ENCODE measurements at regions of chr1 and their contacts with region 1.

Region 1: GRCh38 chr1:111507411-111508201 is 4.2 kb upstream of the ADORA3 start:
- DNase-seq: peak; percentile 35 to 62 (median 40)
- ATAC-seq: peak; percentile 76
- H3K4me3 ChIP-seq: peak overlapping the region; percentile 53
- H3K4me3 Mint-ChIP-seq: peak overlapping the region; percentile 72 to 86 (median 82)
- H3K27ac ChIP-seq: peak overlapping the region; percentile 74
- H3K27ac Mint-ChIP-seq: peak overlapping the region in 8 of 9 donors; percentile 88 to 97 (median 94)
- H3K4me1 ChIP-seq: peaks cover 64 to 83% of the 10 kb centered on the region in 2 donors
- H3K4me1 Mint-ChIP-seq: peaks cover 42 to 65% (median 60%) of the 10 kb centered on the region in 7 donors
- H3K27me3 ChIP-seq: no peaks in the 10 kb centered on the region
- H3K27me3 Mint-ChIP-seq: no peaks in the 10 kb centered on the region

Region 2: DNA sequence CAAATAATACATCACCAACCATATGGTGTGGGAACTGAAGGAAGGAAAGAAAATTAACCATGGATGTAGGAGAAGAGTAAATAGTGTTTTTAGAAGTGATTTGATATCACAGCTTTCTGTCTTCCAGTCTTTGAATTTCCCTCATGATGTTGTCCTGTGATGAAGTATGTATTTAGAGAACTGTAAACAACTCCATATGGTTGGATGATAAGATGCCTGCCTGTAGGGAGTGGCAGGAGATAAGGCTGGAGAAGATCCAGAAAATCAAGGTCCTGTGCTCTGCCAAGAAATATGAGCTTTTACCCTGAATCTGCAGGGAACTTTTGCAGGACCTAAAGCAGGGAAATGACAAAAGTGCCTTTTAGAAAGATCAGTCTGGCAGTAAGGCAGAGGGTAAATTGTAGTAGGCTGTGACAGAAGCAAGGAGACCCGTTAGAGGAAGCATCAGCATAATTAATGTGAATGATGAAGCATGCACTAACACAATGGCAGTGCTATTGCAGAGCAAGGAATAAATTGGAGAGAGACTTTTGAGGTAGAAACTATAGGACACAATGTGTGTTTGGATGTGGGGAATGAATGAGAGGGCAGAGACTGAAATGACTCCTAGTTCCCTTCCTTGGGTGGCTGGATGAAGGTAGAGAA is 345.6 kb before region 1 on chr1:
- CTCF ChIA-PET with region 1: no interaction called
- POLR2A ChIA-PET with region 1: no interaction called
- intact Hi-C with region 1: no loop called
- DNase-seq: no peak
- ATAC-seq: no peak
- H3K4me3 ChIP-seq: no peak overlapping the region
- H3K4me3 Mint-ChIP-seq: no peak overlapping the region
- H3K27ac ChIP-seq: no peak overlapping the region
- H3K27ac Mint-ChIP-seq: peak overlapping the region in 8 of 9 donors; percentile 4 to 66 (median 22)
- H3K4me1 ChIP-seq: no peaks in the 10 kb centered on the region
- H3K4me1 Mint-ChIP-seq: peaks cover 8 to 51% (median 33%) of the 10 kb centered on the region in 7 donors
- H3K27me3 ChIP-seq: no peaks in the 10 kb centered on the region
- H3K27me3 Mint-ChIP-seq: no peaks in the 10 kb centered on the region

Region 3: GRCh38 chr1:111251570-111251969 is 256.0 kb before region 1 on chr1:
- CTCF ChIA-PET with region 1: no interaction called
- POLR2A ChIA-PET with region 1: no interaction called
- intact Hi-C with region 1: no loop called
- DNase-seq: peak in 7 of 9 donors; percentile 25 to 54 (median 37)
- ATAC-seq: peak; percentile 82
- H3K4me3 ChIP-seq: no peak overlapping the region
- H3K4me3 Mint-ChIP-seq: peak overlapping the region in 6 of 10 donors; percentile 7 to 56 (median 24)
- H3K27ac ChIP-seq: peak overlapping the region; percentile 6
- H3K27ac Mint-ChIP-seq: peak overlapping the region; percentile 57 to 95 (median 67)
- H3K4me1 ChIP-seq: peaks cover 4 to 10% of the 10 kb centered on the region in 2 donors
- H3K4me1 Mint-ChIP-seq: peaks cover 9 to 45% (median 39%) of the 10 kb centered on the region in 7 donors
- H3K27me3 ChIP-seq: no peaks in the 10 kb centered on the region
- H3K27me3 Mint-ChIP-seq: peaks cover 0 to 8% (median 0%) of the 10 kb centered on the region in 5 donors

Region 4: DNA sequence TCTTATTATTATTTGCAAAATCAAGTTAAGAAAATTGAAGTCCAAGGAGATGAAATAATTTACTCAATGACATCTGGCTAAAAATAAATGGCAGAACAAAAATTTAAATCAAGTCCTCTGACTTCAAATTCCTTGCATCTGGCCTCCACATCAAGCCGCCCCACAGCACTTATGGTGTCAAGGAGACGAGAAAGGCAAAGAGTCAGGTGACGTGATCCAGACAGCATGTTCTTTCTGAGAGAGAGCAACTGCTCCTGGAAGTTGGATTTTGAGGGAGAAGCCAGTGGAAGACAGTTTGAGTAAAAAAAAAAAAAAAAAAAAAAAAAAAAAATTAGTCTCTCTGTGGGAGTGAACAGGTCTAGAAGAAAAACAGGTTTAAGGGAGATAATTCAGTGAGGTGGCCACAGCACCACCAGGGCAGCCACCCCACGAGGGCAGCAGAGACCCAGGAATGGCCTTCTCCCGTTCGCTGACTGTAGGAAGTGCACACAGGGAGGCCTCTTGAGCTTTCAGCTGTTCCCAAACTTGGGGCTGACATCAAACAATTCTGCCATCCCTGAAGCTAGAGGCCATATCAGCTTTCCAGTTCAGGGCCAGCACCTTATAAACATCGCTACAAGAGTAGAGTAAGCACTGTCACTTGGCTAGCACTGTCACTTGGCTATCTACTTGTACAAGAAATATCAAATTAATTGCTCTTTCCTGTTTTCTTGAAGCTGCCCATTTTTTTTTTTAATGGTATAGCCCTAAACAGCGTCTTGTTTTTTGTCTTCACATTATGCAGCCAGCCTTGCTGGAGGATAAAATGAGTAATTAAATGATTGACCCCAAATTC is 26.0 kb before region 1 on chr1:
- CTCF ChIA-PET with region 1: interaction called, 83 read pairs
- POLR2A ChIA-PET with region 1: interaction called, 21 read pairs
- intact Hi-C with region 1: loop called (anchors 1 kb)
- DNase-seq: peak; percentile 23 to 65 (median 54)
- ATAC-seq: peak; percentile 80
- H3K4me3 ChIP-seq: no peak overlapping the region
- H3K4me3 Mint-ChIP-seq: peak overlapping the region in 1 of 10 donors; percentile 20
- H3K27ac ChIP-seq: no peak overlapping the region
- H3K27ac Mint-ChIP-seq: peak overlapping the region in 4 of 9 donors; percentile 22 to 86 (median 56)
- H3K4me1 ChIP-seq: peaks cover 22 to 25% of the 10 kb centered on the region in 2 donors
- H3K4me1 Mint-ChIP-seq: peaks cover 32 to 68% (median 53%) of the 10 kb centered on the region in 7 donors
- H3K27me3 ChIP-seq: no peaks in the 10 kb centered on the region
- H3K27me3 Mint-ChIP-seq: peaks cover 0 to 25% (median 0%) of the 10 kb centered on the region in 5 donors

Region 5: DNA sequence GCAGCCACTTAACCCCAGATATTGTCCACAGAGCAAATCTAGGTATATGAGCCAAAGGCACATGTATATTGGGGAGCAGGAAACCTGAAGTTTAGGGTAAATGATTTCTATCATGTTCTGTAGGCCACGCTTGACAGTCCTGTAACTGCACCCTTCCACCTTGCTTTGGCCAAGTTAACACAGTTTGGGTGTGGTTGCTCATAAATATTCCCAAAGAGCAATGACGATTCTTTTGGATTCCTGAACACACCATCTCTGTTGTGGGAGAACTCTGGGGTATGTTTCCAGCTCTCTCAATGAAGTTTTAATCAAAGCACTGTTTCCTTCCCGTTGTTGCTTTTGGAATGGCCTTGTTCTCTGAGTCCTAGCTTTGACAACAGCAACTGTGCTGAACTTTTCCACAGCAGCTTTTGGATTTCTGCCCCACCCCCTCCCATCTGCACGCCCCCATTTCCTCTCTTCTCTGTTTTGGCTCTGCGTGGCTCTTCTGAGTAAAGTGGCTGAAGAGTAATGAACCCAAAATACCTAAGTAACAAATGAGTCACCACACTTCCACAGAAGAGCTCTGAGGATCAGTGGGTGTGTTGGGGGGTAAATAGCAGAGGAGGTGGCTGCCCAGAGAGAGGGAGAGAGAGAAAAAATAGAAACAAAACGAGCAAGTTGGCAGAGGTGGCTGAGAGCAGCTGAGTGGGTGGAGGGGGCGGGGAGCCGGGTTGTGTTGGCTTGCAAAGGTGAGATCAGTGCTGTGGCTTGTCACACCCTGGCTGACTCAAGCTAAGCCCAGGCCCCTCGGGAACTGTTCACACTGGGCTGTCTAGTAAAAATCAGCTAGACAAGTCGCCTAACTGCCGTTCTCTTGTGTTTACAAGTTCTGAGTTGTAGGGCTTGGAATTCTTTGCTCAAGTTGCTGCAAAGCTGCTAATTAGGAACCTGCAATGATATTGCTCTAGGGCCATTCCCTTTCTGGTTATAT is 85.1 kb after region 1 on chr1:
- CTCF ChIA-PET with region 1: interaction called, 8 read pairs
- POLR2A ChIA-PET with region 1: interaction called, 6 read pairs
- intact Hi-C with region 1: loop called (anchors 1 kb)
- DNase-seq: peak; percentile 22 to 86 (median 56)
- ATAC-seq: peak; percentile 91
- H3K4me3 ChIP-seq: peak overlapping the region; percentile 29
- H3K4me3 Mint-ChIP-seq: peak overlapping the region; percentile 52 to 82 (median 78)
- H3K27ac ChIP-seq: peak overlapping the region; percentile 62
- H3K27ac Mint-ChIP-seq: peak overlapping the region; percentile 83 to 95 (median 91)
- H3K4me1 ChIP-seq: peaks cover 55 to 65% of the 10 kb centered on the region in 2 donors
- H3K4me1 Mint-ChIP-seq: peaks cover 46 to 72% (median 62%) of the 10 kb centered on the region in 7 donors
- H3K27me3 ChIP-seq: no peaks in the 10 kb centered on the region
- H3K27me3 Mint-ChIP-seq: peaks cover 0 to 2% (median 0%) of the 10 kb centered on the region in 5 donors

Region 6: GRCh38 chr1:111628153-111628552 is 120.5 kb after region 1 on chr1:
- CTCF ChIA-PET with region 1: interaction called, 21 read pairs
- POLR2A ChIA-PET with region 1: interaction called, 4 read pairs
- intact Hi-C with region 1: no loop called
- DNase-seq: no peak
- ATAC-seq: no peak
- H3K4me3 ChIP-seq: no peak overlapping the region
- H3K4me3 Mint-ChIP-seq: peak overlapping the region in 9 of 10 donors; percentile 57 to 86 (median 67)
- H3K27ac ChIP-seq: peak overlapping the region; percentile 59
- H3K27ac Mint-ChIP-seq: peak overlapping the region; percentile 64 to 91 (median 79)
- H3K4me1 ChIP-seq: peaks cover 77 to 86% of the 10 kb centered on the region in 2 donors
- H3K4me1 Mint-ChIP-seq: peaks cover 60 to 97% (median 88%) of the 10 kb centered on the region in 7 donors
- H3K27me3 ChIP-seq: no peaks in the 10 kb centered on the region
- H3K27me3 Mint-ChIP-seq: no peaks in the 10 kb centered on the region

Region 7: DNA sequence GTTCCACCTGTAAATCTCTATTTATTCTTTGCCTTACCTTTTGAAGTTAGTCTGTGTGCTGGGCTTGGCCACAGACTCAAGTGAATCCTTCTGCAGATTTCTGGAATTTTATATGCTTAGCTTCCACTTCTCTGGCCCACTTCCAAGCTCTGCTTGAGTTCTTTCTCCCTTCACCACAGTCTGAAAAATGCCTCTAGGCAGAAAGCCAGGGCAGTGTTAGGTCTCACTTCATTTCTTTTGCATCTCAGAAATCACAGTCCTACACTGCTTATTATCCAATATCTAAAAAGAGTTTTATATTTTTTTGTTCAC is 182.7 kb after region 1 on chr1:
- CTCF ChIA-PET with region 1: interaction called, 12 read pairs
- POLR2A ChIA-PET with region 1: interaction called, 4 read pairs
- intact Hi-C with region 1: loop called in 1 of 2 experiments (anchors 2 kb)
- DNase-seq: no peak
- ATAC-seq: no peak
- H3K4me3 ChIP-seq: no peak overlapping the region
- H3K4me3 Mint-ChIP-seq: peak overlapping the region in 5 of 10 donors; percentile 7 to 55 (median 16)
- H3K27ac ChIP-seq: peak overlapping the region; percentile 35
- H3K27ac Mint-ChIP-seq: peak overlapping the region in 8 of 9 donors; percentile 30 to 88 (median 55)
- H3K4me1 ChIP-seq: peaks cover 8 to 12% of the 10 kb centered on the region in 2 donors
- H3K4me1 Mint-ChIP-seq: peaks cover 40 to 86% (median 73%) of the 10 kb centered on the region in 7 donors
- H3K27me3 ChIP-seq: no peaks in the 10 kb centered on the region
- H3K27me3 Mint-ChIP-seq: no peaks in the 10 kb centered on the region

Region 8: GRCh38 chr1:111739194-111739924 is 231.8 kb after region 1 on chr1 and contains the start of gene INKA2:
- CTCF ChIA-PET with region 1: interaction called, 8 read pairs
- POLR2A ChIA-PET with region 1: interaction called, 3 read pairs
- intact Hi-C with region 1: loop called in 1 of 2 experiments (anchors 1 kb)
- DNase-seq: peak in 7 of 9 donors; percentile 22 to 87 (median 33)
- ATAC-seq: peak; percentile 84
- H3K4me3 ChIP-seq: peak within 1 kb of the TSS; percentile 75
- H3K4me3 Mint-ChIP-seq: peak within 1 kb of the TSS; percentile 82 to 95 (median 88)
- H3K27ac ChIP-seq: no peak within 1 kb of the TSS
- H3K27ac Mint-ChIP-seq: peak within 1 kb of the TSS in 6 of 9 donors; percentile 33 to 71 (median 55)
- H3K4me1 ChIP-seq: peaks cover 8 to 10% of the 10 kb centered on the region in 2 donors
- H3K4me1 Mint-ChIP-seq: peaks cover 15 to 21% (median 16%) of the 10 kb centered on the region in 7 donors
- H3K27me3 ChIP-seq: peaks cover 6 to 17% of the 10 kb centered on the region in 2 donors
- H3K27me3 Mint-ChIP-seq: peaks cover 20 to 46% (median 30%) of the 10 kb centered on the region in 5 donors
- total RNA-seq, gene INKA2: 0.94 to 5.6 (median 2.3) TPM in 3 of 5 experiments, not detected in the others

Region 9: GRCh38 chr1:111769517-111770146 is 262.0 kb after region 1 on chr1:
- CTCF ChIA-PET with region 1: interaction called, 32 read pairs
- POLR2A ChIA-PET with region 1: no interaction called
- intact Hi-C with region 1: loop called in 1 of 2 experiments (anchors 1 kb)
- DNase-seq: peak in 7 of 9 donors; percentile 26 to 68 (median 55)
- ATAC-seq: peak; percentile 82
- H3K4me3 ChIP-seq: no peak overlapping the region
- H3K4me3 Mint-ChIP-seq: no peak overlapping the region
- H3K27ac ChIP-seq: no peak overlapping the region
- H3K27ac Mint-ChIP-seq: peak overlapping the region in 4 of 9 donors; percentile 5 to 56 (median 40)
- H3K4me1 ChIP-seq: no peaks in the 10 kb centered on the region
- H3K4me1 Mint-ChIP-seq: peaks cover 0 to 10% (median 5%) of the 10 kb centered on the region in 7 donors
- H3K27me3 ChIP-seq: no peaks in the 10 kb centered on the region
- H3K27me3 Mint-ChIP-seq: no peaks in the 10 kb centered on the region